Body of pancreas (tissue), 4 donors: ENCODE measurements at regions of chr5 and their contacts with region 1.

Region 1: GRCh38 chr5:138449501-138450239 is 10.8 kb downstream of the REEP2 start:
- DNase-seq: peak; percentile 88 to 94 (median 90)
- ATAC-seq: peak; percentile 98
- H3K4me3 ChIP-seq: no peak overlapping the region
- H3K27ac ChIP-seq: no peak overlapping the region
- H3K4me1 ChIP-seq: peaks cover 3% of the 10 kb centered on the region
- H3K27me3 ChIP-seq: no peaks in the 10 kb centered on the region
- CTCF ChIP-seq: peak; percentile 91 to 98 (median 97)
- POLR2A ChIP-seq: no peak

Region 2: GRCh38 chr5:138542956-138543729 is 93.5 kb after region 1 on chr5 and contains the start of gene ETF1:
- intact Hi-C with region 1: loop called (anchors 10 kb)
- DNase-seq: peak; percentile 100
- ATAC-seq: peak; percentile 95
- H3K4me3 ChIP-seq: peak within 1 kb of the TSS; percentile 94 to 97
- H3K27ac ChIP-seq: peak within 1 kb of the TSS; percentile 95 to 99 (median 98)
- H3K4me1 ChIP-seq: peaks cover 79% of the 10 kb centered on the region
- H3K27me3 ChIP-seq: no peaks in the 10 kb centered on the region
- CTCF ChIP-seq: peak in 3 of 7 experiments; percentile 21 to 34 (median 25)
- POLR2A ChIP-seq: peak; percentile 98 to 99 (median 99)
- total RNA-seq, gene ETF1: 24.9 to 36.6 TPM

Region 3: DNA sequence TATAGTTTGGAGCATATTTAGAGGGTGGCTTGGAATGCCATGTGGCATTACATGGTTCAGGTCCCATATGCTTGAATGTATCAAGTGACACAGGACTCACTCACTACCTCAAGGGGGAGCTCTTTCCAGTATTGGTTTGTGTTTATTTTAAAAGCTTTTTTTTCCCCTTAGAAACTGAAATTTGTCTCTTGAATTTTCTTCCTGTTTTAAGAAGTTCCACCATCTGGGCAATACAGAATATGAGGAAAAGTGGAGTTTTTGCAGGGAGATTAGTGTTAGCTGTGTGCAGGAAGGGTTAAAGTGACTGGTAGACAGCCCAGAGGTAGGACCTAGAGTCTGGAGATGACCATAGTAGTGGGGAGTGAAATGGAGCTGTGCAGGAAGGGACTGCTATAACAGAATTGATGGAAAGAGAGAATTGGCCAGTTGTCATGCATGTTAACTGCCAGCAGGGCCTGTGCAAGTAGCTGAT is 340.1 kb after region 1 on chr5:
- intact Hi-C with region 1: no loop called
- DNase-seq: peak in 3 of 4 donors; percentile 15 to 37 (median 35)
- ATAC-seq: peak; percentile 38
- H3K4me3 ChIP-seq: no peak overlapping the region
- H3K27ac ChIP-seq: no peak overlapping the region
- H3K4me1 ChIP-seq: peaks cover 12% of the 10 kb centered on the region
- H3K27me3 ChIP-seq: no peaks in the 10 kb centered on the region
- CTCF ChIP-seq: peak in 6 of 7 experiments; percentile 33 to 58 (median 54)
- POLR2A ChIP-seq: no peak